ENCODE measurements at regions of chr5 and their contacts with region 1.

Region 1: DNA sequence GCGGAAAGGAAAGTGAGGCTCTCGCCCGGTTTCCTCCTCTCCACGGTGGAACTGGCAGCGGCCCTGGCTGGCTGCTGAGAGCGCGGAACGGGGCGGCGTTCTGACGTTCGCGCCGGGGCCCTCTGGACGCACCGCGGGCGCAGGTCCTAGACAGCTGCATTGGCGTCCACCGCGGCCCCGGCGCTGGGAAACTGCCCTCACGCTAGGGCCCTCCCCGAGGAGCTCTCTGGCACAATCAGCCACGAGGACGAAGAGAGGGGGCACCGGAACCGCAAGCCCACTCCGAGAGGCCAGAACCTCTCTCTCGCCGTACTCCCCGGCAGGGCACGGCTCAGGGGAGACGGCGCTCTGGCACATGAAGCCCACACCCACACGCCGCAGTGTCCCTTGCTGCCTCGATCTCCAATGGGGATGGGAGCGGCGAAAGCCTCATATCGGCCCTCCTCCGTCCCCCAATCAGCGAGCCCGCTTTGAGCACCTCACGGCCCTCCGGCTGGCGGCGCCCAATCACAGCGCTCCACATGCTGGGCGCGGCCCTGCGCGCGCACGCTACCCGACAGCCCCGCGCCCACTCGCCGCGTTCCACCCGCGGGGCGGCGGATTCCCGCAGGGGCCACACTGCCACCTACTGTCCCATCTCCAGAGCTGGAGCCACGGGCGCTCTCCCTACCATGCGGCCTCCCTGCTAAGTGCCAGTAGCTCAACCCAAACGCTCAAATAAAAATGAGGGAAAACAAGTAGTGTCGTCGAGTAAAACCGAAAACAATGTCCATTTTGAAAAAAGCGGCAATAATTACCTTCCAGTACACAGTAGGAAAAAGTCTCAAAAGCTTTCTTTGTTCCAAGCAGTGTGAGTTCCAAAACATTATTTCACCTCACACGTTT is 11.8 kb downstream of the MRPS27 start:
- DNase-seq: peak; percentile 99
- H3K4me3 Mint-ChIP-seq: peak overlapping the region; percentile 89
- H3K27ac Mint-ChIP-seq: peak overlapping the region; percentile 93
- H3K4me1 Mint-ChIP-seq: peaks cover 22% of the 10 kb centered on the region
- H3K27me3 Mint-ChIP-seq: no peaks in the 10 kb centered on the region

Region 2: GRCh38 chr5:71455427-71456361 is 852.5 kb before region 1 on chr5 and contains the start of gene BDP1:
- intact Hi-C with region 1: loop called (anchors 1 kb)
- DNase-seq: peak; percentile 99
- H3K4me3 Mint-ChIP-seq: peak within 1 kb of the TSS; percentile 97
- H3K27ac Mint-ChIP-seq: peak within 1 kb of the TSS; percentile 99
- H3K4me1 Mint-ChIP-seq: peaks cover 23% of the 10 kb centered on the region
- H3K27me3 Mint-ChIP-seq: peaks cover 2% of the 10 kb centered on the region
- total RNA-seq, gene BDP1: 39.1 and 39.4 TPM in 2 replicates

Region 3: DNA sequence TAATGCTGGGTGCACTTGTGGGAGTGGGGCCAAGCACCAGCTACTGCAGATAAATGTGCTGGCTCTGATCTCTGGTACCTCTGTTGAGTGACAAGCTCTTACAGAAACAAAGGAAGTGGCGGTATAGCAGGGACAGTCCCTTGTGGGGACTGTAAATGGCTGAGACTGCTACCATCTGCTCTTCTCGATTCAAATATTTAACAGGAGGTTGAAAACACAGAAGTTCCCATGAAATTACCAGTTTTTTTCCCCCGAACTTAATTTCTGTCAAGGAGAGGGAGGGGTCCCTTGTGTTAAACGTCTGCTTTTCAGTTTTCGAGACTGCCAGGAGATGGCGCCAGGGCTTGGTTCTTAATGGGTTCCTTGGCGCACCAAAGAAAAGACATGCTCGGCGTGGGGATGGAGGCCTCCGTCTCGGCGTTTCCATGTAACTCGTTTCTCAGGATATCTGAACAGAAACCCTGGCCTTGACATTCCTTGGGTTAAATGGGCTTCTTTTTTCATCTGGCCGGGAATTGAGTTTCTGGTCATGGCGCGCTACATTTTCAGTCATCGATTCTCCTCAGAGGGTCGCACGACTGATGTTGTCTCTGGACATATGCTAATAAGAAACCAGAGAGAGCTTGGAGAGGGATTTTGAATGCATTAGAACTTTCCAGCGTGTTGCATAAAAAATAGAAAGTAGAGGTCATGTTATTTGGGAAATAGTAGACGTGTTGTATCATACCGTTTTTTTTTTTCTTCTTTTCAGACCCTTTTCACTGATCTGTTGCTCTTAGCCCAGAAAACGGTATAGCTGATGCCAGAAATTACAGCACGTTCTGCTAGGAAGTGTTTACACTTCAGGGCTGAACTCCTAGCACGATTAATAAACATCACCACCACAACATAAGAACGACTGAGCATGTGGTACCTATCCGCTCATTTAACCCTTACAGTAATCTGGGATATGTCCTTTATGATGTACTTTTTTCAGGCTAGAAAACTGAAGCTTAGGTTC is 525.1 kb before region 1 on chr5:
- intact Hi-C with region 1: loop called (anchors 2 kb)
- DNase-seq: peak; percentile 75
- H3K4me3 Mint-ChIP-seq: peak overlapping the region; percentile 32
- H3K27ac Mint-ChIP-seq: no peak overlapping the region
- H3K4me1 Mint-ChIP-seq: peaks cover 15% of the 10 kb centered on the region
- H3K27me3 Mint-ChIP-seq: peaks cover 11% of the 10 kb centered on the region

Region 4: GRCh38 chr5:72234265-72234700 is 73.9 kb before region 1 on chr5:
- intact Hi-C with region 1: loop called (anchors 2 kb)
- DNase-seq: peak; percentile 75
- H3K4me3 Mint-ChIP-seq: no peak overlapping the region
- H3K27ac Mint-ChIP-seq: peak overlapping the region; percentile 7
- H3K4me1 Mint-ChIP-seq: peaks cover 31% of the 10 kb centered on the region
- H3K27me3 Mint-ChIP-seq: peaks cover 12% of the 10 kb centered on the region

Region 5: DNA sequence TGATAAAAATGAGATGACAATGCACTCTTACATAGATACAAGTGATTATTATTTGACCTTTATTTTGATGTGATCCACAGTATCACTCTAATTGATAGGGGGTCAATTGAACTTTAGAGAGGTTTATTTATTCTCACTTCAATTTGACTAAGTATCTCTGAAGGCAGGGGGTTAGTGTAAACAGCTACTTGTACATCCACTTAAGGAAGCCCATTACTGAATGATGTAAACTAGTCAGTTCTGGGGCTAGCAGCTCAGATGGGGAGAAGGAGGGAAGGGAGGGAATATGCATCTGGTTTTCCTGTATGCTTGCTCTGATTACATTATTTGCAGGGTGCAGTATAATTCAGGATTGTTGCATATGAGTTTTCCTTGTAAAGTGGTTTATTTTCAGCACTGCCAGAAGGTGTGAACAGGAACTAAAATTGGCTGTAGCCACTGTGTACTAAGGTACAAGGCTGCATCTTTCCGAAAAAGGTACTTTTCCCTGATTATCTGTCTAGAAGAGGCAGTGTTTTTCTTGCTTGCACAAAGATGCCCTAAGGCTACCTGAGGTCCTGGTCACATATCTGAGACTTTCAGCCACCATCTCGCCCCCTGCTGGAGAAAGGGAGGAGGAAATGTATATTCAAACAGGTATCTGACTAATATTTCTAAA is 39.3 kb before region 1 on chr5:
- intact Hi-C with region 1: no loop called
- DNase-seq: peak; percentile 78
- H3K4me3 Mint-ChIP-seq: no peak overlapping the region
- H3K27ac Mint-ChIP-seq: no peak overlapping the region
- H3K4me1 Mint-ChIP-seq: no peaks in the 10 kb centered on the region
- H3K27me3 Mint-ChIP-seq: no peaks in the 10 kb centered on the region

Region 6: DNA sequence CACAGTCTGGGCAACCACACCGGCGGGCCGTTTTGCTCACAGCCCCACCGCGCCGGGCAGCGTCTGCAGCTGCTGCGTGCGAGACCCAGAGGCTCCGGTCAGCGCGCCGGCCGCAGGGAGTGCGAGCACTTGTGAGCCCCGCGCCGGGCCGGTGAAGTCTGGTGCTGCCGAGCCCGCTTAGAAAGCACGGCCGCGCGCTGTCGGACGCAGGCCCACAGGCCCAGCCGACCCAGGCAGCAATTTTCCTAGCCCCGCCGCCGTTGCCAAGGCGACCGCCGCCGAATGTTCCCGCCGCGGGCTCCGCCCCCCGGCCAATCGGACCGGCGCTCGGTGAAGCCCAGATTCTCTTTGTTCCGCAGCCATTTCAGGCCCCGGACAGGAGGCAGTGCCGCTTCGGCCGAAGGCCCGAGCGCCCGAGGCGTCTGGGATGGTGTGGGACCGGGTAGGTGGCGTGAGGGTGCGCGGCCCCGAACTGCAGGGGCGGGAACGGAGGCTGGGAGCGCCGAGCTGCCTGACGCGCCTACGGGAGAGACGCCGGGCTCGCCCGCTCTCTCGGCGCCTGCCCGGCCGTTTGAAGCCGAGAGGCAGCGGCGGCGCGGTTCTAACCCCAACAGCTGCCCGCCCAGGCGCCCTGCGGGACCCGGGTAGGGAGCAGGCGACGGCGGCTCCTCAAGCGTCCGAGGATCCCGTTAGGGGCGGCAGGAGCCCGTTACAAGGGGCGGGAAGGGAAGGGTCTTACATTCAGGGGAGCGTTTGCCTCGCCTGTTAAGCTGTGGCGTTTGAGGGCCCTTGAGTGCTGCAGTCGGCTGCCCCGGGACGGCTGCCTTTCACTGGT is 508.3 kb after region 1 on chr5 and contains the start of gene TNPO1:
- intact Hi-C with region 1: loop called (anchors 5 kb)
- DNase-seq: peak; percentile 96
- H3K4me3 Mint-ChIP-seq: peak within 1 kb of the TSS; percentile 93
- H3K27ac Mint-ChIP-seq: peak within 1 kb of the TSS; percentile 92
- H3K4me1 Mint-ChIP-seq: peaks cover 11% of the 10 kb centered on the region
- H3K27me3 Mint-ChIP-seq: peaks cover 19% of the 10 kb centered on the region
- total RNA-seq, gene TNPO1: 138 TPM in 2 replicates

Region 7: GRCh38 chr5:73498057-73499008 is 1190.1 kb after region 1 on chr5 and contains the start of gene BTF3:
- intact Hi-C with region 1: loop called (anchors 10 kb)
- DNase-seq: peak; percentile 98
- H3K4me3 Mint-ChIP-seq: peak within 1 kb of the TSS; percentile 99
- H3K27ac Mint-ChIP-seq: peak within 1 kb of the TSS; percentile 100
- H3K4me1 Mint-ChIP-seq: peaks cover 30% of the 10 kb centered on the region
- H3K27me3 Mint-ChIP-seq: peaks cover 12% of the 10 kb centered on the region
- total RNA-seq, gene BTF3: 960 and 998 TPM in 2 replicates